CD14-positive monocyte (primary cell): ENCODE measurements at regions of chr15 and their contacts with region 1.

Region 1: DNA sequence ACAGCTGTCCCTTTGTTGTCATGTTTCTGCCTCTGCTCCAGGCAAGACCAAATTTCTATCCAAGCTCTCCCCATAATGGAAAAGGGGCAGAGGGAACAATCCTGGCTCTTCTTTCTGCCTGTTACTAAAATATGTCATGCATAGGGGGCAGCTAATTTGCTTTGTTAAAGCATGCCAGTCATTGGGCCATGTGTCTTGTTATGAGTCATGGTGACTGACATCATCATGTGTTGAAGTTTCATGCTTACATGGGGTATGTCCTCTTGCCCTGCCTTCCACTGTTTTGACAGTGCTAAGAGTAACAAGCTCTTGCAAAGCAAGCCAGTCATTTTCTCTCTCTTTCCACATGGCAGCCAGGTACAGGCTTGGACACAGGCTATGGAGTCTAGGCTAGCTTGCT is 268.9 kb downstream of the GABRB3 start:
- DNase-seq: no peak
- H3K4me3 ChIP-seq: no peak overlapping the region
- H3K4me3 Mint-ChIP-seq: no peak overlapping the region
- H3K27ac ChIP-seq: no peak overlapping the region
- H3K27ac Mint-ChIP-seq: no peak overlapping the region
- H3K4me1 ChIP-seq: no peaks in the 10 kb centered on the region
- H3K4me1 Mint-ChIP-seq: no peaks in the 10 kb centered on the region
- H3K27me3 ChIP-seq: no peaks in the 10 kb centered on the region
- H3K27me3 Mint-ChIP-seq: peaks cover 0 to 2% (median 0%) of the 10 kb centered on the region in 3 donors
- CTCF ChIP-seq: no peak

Region 2: DNA sequence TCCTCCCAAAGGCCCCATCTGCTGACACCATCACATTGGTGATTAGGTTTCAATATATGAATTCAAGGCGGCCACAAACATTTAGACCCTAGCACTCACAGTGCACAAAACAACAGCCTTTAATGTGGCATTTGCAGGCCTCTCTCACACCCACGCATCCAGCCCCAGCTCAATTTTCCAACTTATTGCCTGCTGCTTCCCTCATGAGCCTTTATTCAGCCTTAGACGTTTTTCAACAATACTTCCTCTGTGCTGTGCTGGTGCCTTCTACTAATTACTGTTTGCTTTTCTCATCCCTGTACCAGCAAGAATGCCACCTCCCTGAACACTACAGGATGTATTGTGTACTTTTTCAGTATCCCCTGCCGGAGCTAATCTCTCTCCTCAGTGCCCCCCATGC is 65.7 kb before region 1 on chr15:
- intact Hi-C with region 1: loop called in 1 of 2 experiments (anchors 10 kb)
- DNase-seq: no peak
- H3K4me3 ChIP-seq: no peak overlapping the region
- H3K4me3 Mint-ChIP-seq: no peak overlapping the region
- H3K27ac ChIP-seq: no peak overlapping the region
- H3K27ac Mint-ChIP-seq: no peak overlapping the region
- H3K4me1 ChIP-seq: no peaks in the 10 kb centered on the region
- H3K4me1 Mint-ChIP-seq: no peaks in the 10 kb centered on the region
- H3K27me3 ChIP-seq: no peaks in the 10 kb centered on the region
- H3K27me3 Mint-ChIP-seq: no peaks in the 10 kb centered on the region
- CTCF ChIP-seq: no peak